BJ (cell line): ENCODE measurements at regions of chr17 and their contacts with region 1.

Region 1: DNA sequence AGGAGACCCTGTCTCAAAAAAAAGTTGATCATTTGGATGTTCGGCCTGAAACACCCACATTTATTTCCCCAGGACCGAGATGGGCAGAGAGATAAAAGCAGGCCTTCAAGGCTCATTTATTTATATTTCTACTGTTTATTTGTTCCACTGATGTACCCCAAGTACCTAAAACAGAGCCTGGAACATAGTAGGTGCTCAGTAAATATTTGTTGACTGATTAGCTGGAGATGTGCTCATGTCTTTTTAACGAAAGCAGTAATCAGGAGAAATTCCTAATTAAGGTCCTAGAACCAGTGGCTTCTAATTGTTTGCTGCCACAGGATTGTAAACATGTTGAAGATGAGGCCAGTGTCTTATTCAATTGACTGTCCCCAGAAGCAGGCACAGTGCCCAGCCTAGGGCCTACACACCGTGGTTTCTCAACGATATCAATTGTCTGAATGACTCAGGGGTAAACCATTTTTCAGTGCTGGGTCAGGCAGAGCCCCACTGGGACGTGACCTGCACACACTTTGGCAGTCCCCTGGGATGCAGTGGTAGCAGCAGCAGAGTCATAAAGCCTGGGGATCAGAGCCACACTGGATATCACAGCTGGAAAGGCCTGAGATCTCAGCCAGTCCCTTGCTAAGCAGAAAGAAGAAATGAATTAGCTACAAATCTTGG is 34.8 kb downstream of the SOST start:
- DNase-seq: no peak
- H3K4me3 ChIP-seq: no peak overlapping the region
- H3K27me3 ChIP-seq: no peaks in the 10 kb centered on the region
- CTCF ChIP-seq: no peak

Region 2: GRCh38 chr17:43900183-43900857 is 176.5 kb after region 1 on chr17:
- CTCF ChIA-PET with region 1: no interaction called
- POLR2A ChIA-PET with region 1: interaction called, 10 read pairs
- DNase-seq: no peak
- H3K4me3 ChIP-seq: peak overlapping the region; percentile 27
- H3K27me3 ChIP-seq: no peaks in the 10 kb centered on the region
- CTCF ChIP-seq: no peak